ENCODE measurements at regions of chr7 and their contacts with region 1.

Region 1: DNA sequence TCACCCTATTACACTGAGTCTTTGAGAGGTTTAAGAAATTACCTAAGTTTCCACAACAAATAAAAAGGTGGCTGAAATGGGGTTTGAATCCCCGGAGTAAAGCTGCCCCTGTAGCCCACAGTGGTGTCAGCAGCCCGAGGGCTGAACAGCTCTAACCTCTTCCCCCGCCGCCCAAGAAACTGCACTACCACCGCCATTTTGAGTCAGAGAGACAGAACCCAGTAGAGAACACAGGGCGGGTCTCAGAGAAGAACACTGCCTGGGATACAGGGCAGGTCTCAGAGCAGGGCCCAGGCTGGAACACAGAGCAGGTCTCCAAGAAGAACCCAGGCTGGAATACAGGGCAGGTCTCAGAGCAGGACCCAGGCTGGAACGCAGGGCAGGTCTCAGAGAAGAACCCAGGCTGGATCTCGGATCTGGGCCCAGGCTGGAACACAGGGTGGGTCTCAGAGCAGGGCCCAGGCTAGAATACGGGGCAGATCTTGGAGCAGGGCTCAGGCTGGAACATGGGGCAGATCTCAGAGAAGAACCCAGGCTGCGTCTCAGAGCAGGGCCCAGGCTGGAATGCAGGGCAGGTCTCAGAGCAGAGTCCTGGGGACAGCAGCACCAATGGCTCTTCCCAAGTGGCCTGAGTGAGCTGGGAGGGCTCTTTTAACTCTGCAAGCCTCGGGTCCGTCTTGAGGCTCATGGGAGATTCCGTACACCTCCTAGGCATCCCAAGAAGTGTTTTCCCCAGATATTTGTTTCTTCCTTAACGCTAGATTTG is 85.9 kb upstream of the LANCL2 start:
- DNase-seq: no peak
- ATAC-seq: no peak
- H3K4me3 ChIP-seq: no peak overlapping the region
- H3K27ac ChIP-seq: no peak overlapping the region
- H3K4me1 ChIP-seq: no peaks in the 10 kb centered on the region
- H3K27me3 ChIP-seq: no peaks in the 10 kb centered on the region
- CTCF ChIP-seq: no peak
- POLR2A ChIP-seq: no peak

Region 2: DNA sequence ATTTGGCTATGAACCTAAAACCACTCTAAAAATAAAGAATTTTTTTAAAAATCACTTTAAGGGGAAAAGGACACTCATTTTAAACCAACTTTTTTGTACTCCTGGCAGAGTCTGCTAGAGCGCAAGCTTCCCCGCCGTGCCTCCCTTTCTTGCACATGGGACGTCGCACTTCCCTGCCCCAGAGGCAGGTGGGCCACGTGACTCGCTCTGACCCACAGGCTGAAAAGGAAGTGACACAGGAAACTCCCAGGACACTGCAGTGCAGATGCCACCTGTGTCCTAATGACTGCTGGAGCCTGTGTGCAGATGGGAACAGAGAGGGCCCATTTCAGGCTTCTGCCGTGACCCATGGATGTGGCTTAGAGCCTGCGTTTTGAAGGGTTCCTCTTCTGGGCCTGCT is 56.2 kb before region 1 on chr7:
- intact Hi-C with region 1: no loop called
- DNase-seq: no peak
- ATAC-seq: no peak
- H3K4me3 ChIP-seq: no peak overlapping the region
- H3K27ac ChIP-seq: no peak overlapping the region
- H3K4me1 ChIP-seq: no peaks in the 10 kb centered on the region
- H3K27me3 ChIP-seq: no peaks in the 10 kb centered on the region
- CTCF ChIP-seq: no peak
- POLR2A ChIP-seq: no peak

Region 3: DNA sequence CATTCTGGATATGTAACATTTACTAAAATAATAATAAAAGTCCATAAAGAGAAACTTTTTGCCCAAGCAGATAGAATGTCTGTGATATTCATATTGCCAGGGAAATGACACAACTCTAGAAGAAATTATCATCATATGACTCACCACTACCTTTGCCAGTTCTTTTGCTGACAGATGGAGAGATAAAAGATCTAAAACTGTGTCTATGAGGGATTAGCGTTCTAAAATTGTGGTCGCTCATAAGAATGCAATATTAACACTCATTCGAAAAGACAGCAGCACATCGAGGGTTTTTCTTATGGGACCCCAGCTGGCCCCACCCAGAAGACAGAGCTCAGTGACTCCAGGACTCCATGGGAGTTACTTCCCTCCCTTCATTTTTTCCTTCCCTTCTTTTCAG is 69.2 kb after region 1 on chr7:
- intact Hi-C with region 1: no loop called
- DNase-seq: no peak
- ATAC-seq: no peak
- H3K4me3 ChIP-seq: no peak overlapping the region
- H3K27ac ChIP-seq: no peak overlapping the region
- H3K4me1 ChIP-seq: no peaks in the 10 kb centered on the region
- H3K27me3 ChIP-seq: no peaks in the 10 kb centered on the region
- CTCF ChIP-seq: no peak
- POLR2A ChIP-seq: no peak

Region 4: DNA sequence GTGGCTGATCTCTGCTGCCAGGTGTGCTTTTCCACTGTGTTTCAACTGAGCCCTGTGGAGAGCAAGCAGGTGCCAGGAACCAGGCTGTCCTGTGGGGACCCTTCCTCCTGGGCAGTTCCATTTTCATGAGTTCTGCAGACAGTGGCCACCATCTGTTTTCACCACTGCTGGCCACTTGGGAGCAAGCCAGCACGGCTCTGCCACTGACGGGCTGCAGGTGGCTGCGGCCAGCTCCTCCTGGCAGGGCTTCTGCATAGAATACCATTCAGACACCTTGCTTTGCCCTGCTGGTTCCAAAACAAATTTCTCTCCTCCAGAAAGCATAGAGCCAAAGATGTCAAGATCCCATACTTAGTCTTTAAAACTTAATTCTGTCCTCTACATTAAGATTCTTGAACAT is 134.2 kb after region 1 on chr7:
- intact Hi-C with region 1: loop called (anchors 2 kb)
- DNase-seq: peak in 1 of 4 donors; percentile 72
- ATAC-seq: no peak
- H3K4me3 ChIP-seq: no peak overlapping the region
- H3K27ac ChIP-seq: no peak overlapping the region
- H3K4me1 ChIP-seq: peaks cover 11% of the 10 kb centered on the region
- H3K27me3 ChIP-seq: no peaks in the 10 kb centered on the region
- CTCF ChIP-seq: no peak
- POLR2A ChIP-seq: no peak